Activated CD8-positive, alpha-beta memory T cell treated with anti-CD3 and anti-CD28 coated beads, Interleukin-2, amount 10 ng/mL, durations not matched to agents 7 days and 5 days (primary cell): ENCODE measurements at regions of chr17 and their contacts with region 1.

Region 1: DNA sequence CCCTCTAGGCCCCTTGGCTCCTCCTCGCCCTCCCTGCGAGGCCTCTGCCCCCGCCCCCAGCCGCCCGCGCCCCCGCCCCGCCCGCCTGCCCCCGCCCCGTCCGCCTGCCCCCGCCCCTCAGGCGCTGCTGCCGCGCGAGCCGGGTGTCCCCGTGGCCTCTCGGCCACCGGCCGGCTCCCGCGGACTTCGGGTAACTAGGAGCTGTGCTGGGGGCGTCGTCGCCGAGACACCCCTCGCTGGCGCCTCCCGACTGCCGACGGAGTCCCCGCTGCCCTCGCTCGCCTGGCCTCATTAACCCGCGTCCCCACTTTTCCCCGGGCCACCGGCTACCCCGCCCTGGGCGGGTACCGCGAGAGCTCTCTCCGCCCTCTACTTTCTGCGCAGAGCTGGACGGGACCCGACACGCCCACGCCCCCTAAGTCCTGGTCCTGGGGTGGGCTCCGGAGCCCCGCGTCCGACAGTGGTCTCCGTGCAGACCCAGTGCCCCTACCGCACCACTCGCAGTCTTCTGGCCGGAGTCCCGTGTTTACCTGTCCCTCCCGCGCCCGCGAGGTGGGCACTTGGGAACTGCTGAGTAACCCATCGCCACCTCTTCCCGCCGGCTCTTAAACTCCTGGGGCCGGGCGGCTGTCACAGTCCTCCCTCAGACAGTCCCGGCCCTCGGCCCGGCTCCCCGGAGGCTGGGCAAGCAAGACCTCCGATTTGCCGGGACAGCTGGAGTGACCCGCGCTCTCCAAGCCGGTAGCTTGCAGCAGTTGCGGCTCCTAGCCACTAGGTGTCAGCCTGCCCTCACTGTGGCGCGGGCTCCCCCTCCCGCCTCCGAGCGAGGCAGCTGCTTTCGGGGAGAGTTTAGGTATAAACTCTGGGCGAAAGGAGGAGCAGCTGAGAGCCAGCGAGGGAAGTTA is at the start of gene TLCD1:
- DNase-seq: peak; percentile 96
- ATAC-seq: peak; percentile 65
- H3K4me3 Mint-ChIP-seq: peak within 1 kb of the TSS; percentile 91
- H3K27ac Mint-ChIP-seq: peak within 1 kb of the TSS; percentile 94
- H3K4me1 Mint-ChIP-seq: peaks cover 51% of the 10 kb centered on the region
- H3K27me3 Mint-ChIP-seq: no peaks in the 10 kb centered on the region
- total RNA-seq, gene TLCD1: 3.2 to 5.6 TPM

Region 2: GRCh38 chr17:28710861-28711722 is 15.4 kb before region 1 on chr17:
- CTCF ChIA-PET with region 1: interaction called, 52 read pairs
- DNase-seq: peak; percentile 92
- ATAC-seq: peak; percentile 93
- H3K4me3 Mint-ChIP-seq: peak overlapping the region; percentile 81
- H3K27ac Mint-ChIP-seq: peak overlapping the region; percentile 93
- H3K4me1 Mint-ChIP-seq: peaks cover 17% of the 10 kb centered on the region
- H3K27me3 Mint-ChIP-seq: peaks cover 19% of the 10 kb centered on the region

Region 3: GRCh38 chr17:28812091-28812747 is 85.7 kb after region 1 on chr17:
- CTCF ChIA-PET with region 1: interaction called, 12 read pairs
- DNase-seq: peak; percentile 98
- ATAC-seq: peak; percentile 100
- H3K4me3 Mint-ChIP-seq: peak overlapping the region; percentile 83
- H3K27ac Mint-ChIP-seq: peak overlapping the region; percentile 89
- H3K4me1 Mint-ChIP-seq: peaks cover 25% of the 10 kb centered on the region
- H3K27me3 Mint-ChIP-seq: no peaks in the 10 kb centered on the region

Region 4: GRCh38 chr17:28871056-28871579 is 144.6 kb after region 1 on chr17:
- CTCF ChIA-PET with region 1: interaction called, 12 read pairs
- DNase-seq: peak; percentile 86
- ATAC-seq: peak; percentile 99
- H3K4me3 Mint-ChIP-seq: no peak overlapping the region
- H3K27ac Mint-ChIP-seq: peak overlapping the region; percentile 93
- H3K4me1 Mint-ChIP-seq: peaks cover 24% of the 10 kb centered on the region
- H3K27me3 Mint-ChIP-seq: no peaks in the 10 kb centered on the region

Region 5: DNA sequence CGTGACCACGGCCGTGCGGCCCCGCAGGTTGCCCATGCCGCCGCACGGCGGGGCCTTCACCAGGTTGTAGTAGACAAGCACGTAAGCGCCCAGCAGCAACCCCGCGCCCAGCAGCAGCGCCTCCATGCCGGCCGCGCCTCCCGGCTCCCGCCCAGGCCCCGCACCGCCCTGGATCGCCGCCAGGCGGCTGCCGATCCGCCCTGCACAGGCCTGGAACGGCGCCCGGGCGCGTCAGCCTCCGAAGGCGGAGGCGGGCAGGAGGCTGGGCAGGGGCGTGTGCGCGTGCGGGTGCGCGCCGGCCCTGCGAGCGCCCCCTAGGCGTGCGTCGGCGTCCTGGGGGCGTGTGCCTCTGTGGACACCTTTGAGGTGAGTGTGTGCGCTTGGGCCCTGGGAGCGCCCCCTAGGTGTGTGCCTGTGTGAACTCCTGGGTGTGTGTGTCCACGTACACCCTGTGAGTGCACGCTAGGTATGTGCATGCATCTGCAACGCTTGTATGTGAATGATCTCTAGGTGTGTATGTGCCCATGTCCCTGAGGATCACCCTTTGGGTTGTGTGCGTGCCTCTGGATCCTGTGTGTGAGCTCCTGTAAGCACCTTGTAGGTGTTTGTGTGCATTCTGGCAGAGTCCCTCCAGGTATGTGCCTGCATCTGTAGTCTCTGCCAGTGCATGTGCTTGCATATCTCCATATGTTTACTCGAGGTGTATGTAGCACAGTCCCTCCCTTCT is 176.5 kb after region 1 on chr17 and contains the start of gene DHRS13:
- CTCF ChIA-PET with region 1: interaction called, 37 read pairs
- DNase-seq: peak; percentile 94
- ATAC-seq: peak; percentile 97
- H3K4me3 Mint-ChIP-seq: peak within 1 kb of the TSS; percentile 89
- H3K27ac Mint-ChIP-seq: peak within 1 kb of the TSS; percentile 84
- H3K4me1 Mint-ChIP-seq: peaks cover 43% of the 10 kb centered on the region
- H3K27me3 Mint-ChIP-seq: no peaks in the 10 kb centered on the region
- total RNA-seq, gene DHRS13: 23.1 to 25.9 TPM

Region 6: GRCh38 chr17:28925912-28926365 is 199.5 kb after region 1 on chr17:
- CTCF ChIA-PET with region 1: interaction called, 13 read pairs
- DNase-seq: peak; percentile 73
- ATAC-seq: peak; percentile 93
- H3K4me3 Mint-ChIP-seq: peak overlapping the region; percentile 38
- H3K27ac Mint-ChIP-seq: peak overlapping the region; percentile 77
- H3K4me1 Mint-ChIP-seq: peaks cover 55% of the 10 kb centered on the region
- H3K27me3 Mint-ChIP-seq: no peaks in the 10 kb centered on the region

Region 7: GRCh38 chr17:29116804-29117772 is 390.6 kb after region 1 on chr17:
- CTCF ChIA-PET with region 1: interaction called, 22 read pairs
- DNase-seq: peak; percentile 84
- ATAC-seq: peak; percentile 80
- H3K4me3 Mint-ChIP-seq: no peak overlapping the region
- H3K27ac Mint-ChIP-seq: no peak overlapping the region
- H3K4me1 Mint-ChIP-seq: peaks cover 11% of the 10 kb centered on the region
- H3K27me3 Mint-ChIP-seq: no peaks in the 10 kb centered on the region